H1 (cell line): ENCODE measurements at regions of chr7 and their contacts with region 1.

Region 1: DNA sequence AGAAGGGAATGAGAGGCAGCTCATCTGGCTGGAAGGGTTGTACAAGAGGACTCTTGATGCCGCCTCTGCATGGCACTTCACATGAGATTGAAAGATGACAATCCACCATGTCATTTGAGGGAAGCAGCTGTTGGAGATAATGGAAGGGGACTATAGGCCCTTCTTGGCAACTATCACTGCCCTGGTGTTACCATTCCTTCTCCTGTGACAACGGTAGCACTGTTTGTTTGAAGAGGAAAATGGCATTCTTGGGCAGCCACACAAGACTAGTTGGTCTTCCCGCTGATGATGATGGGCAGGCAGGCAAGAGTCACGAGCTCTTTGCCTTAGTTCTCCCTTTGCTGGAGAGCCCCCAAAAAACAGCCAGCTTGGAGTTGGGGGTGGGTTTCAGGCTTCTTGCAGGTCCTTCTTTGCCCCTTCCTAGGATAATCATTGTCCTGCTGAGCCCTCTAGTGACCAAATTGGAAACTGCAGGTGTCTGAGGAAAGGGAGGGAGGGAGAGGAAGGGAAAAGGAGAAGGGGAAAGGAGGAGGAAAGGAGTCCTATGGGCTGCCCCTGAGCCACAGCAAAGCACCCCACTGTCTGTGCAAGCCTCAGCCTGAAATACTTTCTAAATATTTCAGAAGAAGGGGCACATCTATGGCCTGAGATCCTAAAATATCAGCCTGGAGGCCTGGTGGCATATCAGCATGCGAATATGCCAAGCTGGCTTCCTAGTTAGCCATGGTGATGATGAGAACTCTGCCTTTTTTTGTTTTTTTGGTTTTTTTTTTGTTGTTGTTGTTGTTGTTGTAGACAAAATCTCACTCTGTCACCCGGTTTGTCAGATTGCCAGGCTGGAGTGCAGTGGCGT is 165.6 kb upstream of the KMT2E start:
- DNase-seq: peak; percentile 41 to 94
- H3K4me3 ChIP-seq: no peak overlapping the region
- H3K27ac ChIP-seq: no peak overlapping the region
- H3K4me1 ChIP-seq: peaks cover 0 to 3% (median 0%) of the 10 kb centered on the region in 4 experiments; a peak in 1 of 7 replicates
- H3K27me3 ChIP-seq: no peaks in the 10 kb centered on the region
- CTCF ChIP-seq: peak; percentile 29 to 91 (median 86)
- EP300 ChIP-seq: no peak
- POLR2A ChIP-seq: no peak
- RAD21 ChIP-seq: peak; percentile 95 to 96

Region 2: GRCh38 chr7:104650991-104651640 is 197.2 kb before region 1 on chr7:
- CTCF ChIA-PET with region 1: interaction called, 94 read pairs
- POLR2A ChIA-PET with region 1: no interaction called
- DNase-seq: no peak
- H3K4me3 ChIP-seq: no peak overlapping the region
- H3K27ac ChIP-seq: no peak overlapping the region
- H3K4me1 ChIP-seq: no peaks in the 10 kb centered on the region
- H3K27me3 ChIP-seq: no peaks in the 10 kb centered on the region
- CTCF ChIP-seq: no peak
- EP300 ChIP-seq: no peak
- POLR2A ChIP-seq: no peak
- RAD21 ChIP-seq: no peak

Region 3: GRCh38 chr7:104767826-104768536 is 80.4 kb before region 1 on chr7:
- CTCF ChIA-PET with region 1: interaction called, 51 read pairs
- POLR2A ChIA-PET with region 1: no interaction called
- DNase-seq: no peak
- H3K4me3 ChIP-seq: no peak overlapping the region
- H3K27ac ChIP-seq: no peak overlapping the region
- H3K4me1 ChIP-seq: peaks cover 1 to 9% (median 3%) of the 10 kb centered on the region in 4 experiments; a peak in 6 of 7 replicates
- H3K27me3 ChIP-seq: peaks cover 0 to 1% (median 0%) of the 10 kb centered on the region in 4 experiments; a peak in 1 of 7 replicates
- CTCF ChIP-seq: peak in 2 of 3 experiments; percentile 47 to 51; a peak in 3 of 4 replicates
- EP300 ChIP-seq: no peak
- POLR2A ChIP-seq: no peak
- RAD21 ChIP-seq: peak; percentile 70 to 74

Region 4: DNA sequence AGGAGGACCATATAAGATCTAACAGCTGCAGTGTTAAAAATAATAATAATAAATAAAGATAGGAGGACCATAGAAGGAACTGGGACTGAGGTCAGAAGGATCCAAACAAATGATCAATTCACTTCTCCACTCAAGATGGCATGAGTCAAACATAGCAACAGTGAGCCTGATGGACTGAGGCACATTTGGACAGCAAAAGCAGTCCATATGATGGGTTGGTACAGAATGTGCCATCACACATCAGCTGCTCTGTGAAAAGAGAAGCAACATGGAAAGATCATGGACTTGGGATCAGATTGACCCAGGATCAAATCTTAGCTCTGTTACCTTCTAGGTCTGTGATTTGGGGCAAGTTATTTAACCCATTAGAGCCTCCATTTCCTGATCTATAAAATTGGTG is 23.3 kb before region 1 on chr7:
- CTCF ChIA-PET with region 1: interaction called, 25 read pairs
- POLR2A ChIA-PET with region 1: no interaction called
- DNase-seq: no peak
- H3K4me3 ChIP-seq: no peak overlapping the region
- H3K27ac ChIP-seq: no peak overlapping the region
- H3K4me1 ChIP-seq: peaks cover 0 to 4% (median 3%) of the 10 kb centered on the region in 4 experiments; a peak in 4 of 7 replicates
- H3K27me3 ChIP-seq: no peaks in the 10 kb centered on the region
- CTCF ChIP-seq: no peak
- EP300 ChIP-seq: no peak
- POLR2A ChIP-seq: no peak
- RAD21 ChIP-seq: no peak

Region 5: GRCh38 chr7:104883718-104884452 is 35.5 kb after region 1 on chr7:
- CTCF ChIA-PET with region 1: interaction called, 20 read pairs
- POLR2A ChIA-PET with region 1: no interaction called
- DNase-seq: peak; percentile 68 to 93
- H3K4me3 ChIP-seq: no peak overlapping the region
- H3K27ac ChIP-seq: no peak overlapping the region
- H3K4me1 ChIP-seq: peaks cover 0 to 2% (median 0%) of the 10 kb centered on the region in 4 experiments; a peak in 2 of 7 replicates
- H3K27me3 ChIP-seq: peaks cover 0 to 2% (median 0%) of the 10 kb centered on the region in 4 experiments; a peak in 2 of 7 replicates
- CTCF ChIP-seq: peak; percentile 87 to 97 (median 94)
- EP300 ChIP-seq: no peak
- POLR2A ChIP-seq: no peak
- RAD21 ChIP-seq: peak; percentile 70 to 77